ENCODE measurements at regions of chr1 and their contacts with region 1.

Region 1: DNA sequence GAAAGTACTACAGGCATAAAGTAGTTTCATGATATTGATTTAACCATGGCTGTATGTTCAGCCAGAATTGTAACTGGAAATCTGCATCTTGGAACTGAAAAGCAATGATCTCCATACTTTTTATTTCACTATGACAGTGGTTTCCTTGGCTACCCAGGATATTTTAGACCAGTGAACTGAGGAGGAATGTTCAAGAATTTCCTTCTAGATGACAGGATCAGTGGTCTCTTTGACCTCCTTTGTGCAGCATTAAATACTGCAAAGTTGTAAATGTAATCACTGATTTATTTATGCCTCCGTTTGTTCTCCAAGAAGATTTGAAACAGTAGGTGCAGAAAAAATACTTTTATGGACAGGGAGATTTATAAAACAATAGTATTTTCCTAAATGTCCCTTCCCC is 39.5 kb downstream of the VPS13D start:
- DNase-seq: no peak
- ATAC-seq: no peak
- H3K4me3 ChIP-seq: no peak overlapping the region
- H3K27ac ChIP-seq: no peak overlapping the region
- H3K4me1 ChIP-seq: no peaks in the 10 kb centered on the region
- H3K27me3 ChIP-seq: no peaks in the 10 kb centered on the region
- CTCF ChIP-seq: no peak
- EP300 ChIP-seq: no peak
- POLR2A ChIP-seq: no peak
- RAD21 ChIP-seq: no peak

Region 2: DNA sequence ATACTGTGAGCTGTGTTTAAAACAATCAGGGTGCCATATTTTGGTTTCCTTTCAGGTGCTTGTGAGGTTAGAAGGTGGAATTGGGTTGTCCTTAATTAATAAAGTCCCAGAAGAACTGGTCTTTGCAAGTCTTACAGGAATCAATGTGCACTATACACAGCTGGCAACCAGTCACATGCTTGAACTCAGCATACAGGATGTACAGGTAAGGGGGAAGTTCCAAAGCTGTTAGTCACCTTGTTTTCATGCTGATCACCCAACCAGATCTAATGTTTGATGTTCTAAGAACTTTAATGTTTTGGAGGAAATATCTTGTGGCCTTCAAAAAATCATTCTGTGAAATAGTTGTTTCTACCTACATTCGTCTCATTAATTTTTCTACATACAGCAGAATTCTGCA is 116.8 kb after region 1 on chr1:
- CTCF ChIA-PET with region 1: no interaction called
- POLR2A ChIA-PET with region 1: no interaction called
- in situ Hi-C with region 1: no loop called
- intact Hi-C with region 1: no loop called
- DNase-seq: no peak
- ATAC-seq: no peak
- H3K4me3 ChIP-seq: no peak overlapping the region
- H3K27ac ChIP-seq: no peak overlapping the region
- H3K4me1 ChIP-seq: no peaks in the 10 kb centered on the region
- H3K27me3 ChIP-seq: no peaks in the 10 kb centered on the region
- CTCF ChIP-seq: no peak
- EP300 ChIP-seq: no peak
- POLR2A ChIP-seq: no peak
- RAD21 ChIP-seq: no peak

Region 3: GRCh38 chr1:13911697-13912619 is 1642.6 kb after region 1 on chr1:
- CTCF ChIA-PET with region 1: no interaction called
- POLR2A ChIA-PET with region 1: no interaction called
- in situ Hi-C with region 1: no loop called
- intact Hi-C with region 1: loop called (anchors 10 kb)
- DNase-seq: no peak
- ATAC-seq: no peak
- H3K4me3 ChIP-seq: no peak overlapping the region
- H3K27ac ChIP-seq: no peak overlapping the region
- H3K4me1 ChIP-seq: no peaks in the 10 kb centered on the region
- H3K27me3 ChIP-seq: peaks cover 0 to 21% of the 10 kb centered on the region in 2 experiments; a peak in 3 of 5 replicates
- CTCF ChIP-seq: no peak
- EP300 ChIP-seq: no peak
- POLR2A ChIP-seq: no peak
- RAD21 ChIP-seq: no peak